ENCODE measurements at regions of chr21 and their contacts with region 1.

Region 1: DNA sequence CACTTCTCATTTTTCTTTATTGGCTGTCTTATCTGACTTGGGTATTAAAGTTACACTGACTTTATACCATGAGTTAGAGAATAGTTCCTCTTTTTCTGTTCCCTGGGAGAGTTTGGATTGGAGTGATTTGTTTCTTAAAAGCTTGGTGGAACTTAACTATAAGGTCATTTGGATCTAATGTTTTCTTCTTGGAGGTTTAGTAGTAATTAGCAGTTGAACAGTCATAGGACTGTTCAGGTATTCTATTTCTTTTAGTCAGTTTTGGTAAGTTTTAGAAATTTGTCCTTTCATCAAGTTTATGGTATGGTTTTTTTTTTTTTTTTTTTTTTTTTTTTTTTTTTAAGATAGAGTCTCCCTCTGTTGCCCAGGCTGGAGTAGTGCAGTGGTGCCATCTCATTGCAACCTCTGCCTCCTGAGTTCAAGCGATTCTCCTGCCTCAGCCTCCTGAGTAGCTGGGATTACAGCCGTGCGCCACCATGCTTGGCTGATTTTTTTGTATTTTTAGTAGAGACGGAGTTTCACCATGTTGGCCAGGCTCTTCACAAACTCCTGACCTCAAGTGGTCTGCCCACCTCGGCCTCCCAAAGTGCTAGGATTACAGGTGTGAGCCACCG is 6.3 kb downstream of the TTC3 start:
- DNase-seq: no peak
- H3K4me3 ChIP-seq: no peak overlapping the region
- H3K27ac ChIP-seq: no peak overlapping the region
- H3K4me1 ChIP-seq: no peaks in the 10 kb centered on the region
- H3K27me3 ChIP-seq: no peaks in the 10 kb centered on the region
- CTCF ChIP-seq: peak; percentile 49

Region 2: DNA sequence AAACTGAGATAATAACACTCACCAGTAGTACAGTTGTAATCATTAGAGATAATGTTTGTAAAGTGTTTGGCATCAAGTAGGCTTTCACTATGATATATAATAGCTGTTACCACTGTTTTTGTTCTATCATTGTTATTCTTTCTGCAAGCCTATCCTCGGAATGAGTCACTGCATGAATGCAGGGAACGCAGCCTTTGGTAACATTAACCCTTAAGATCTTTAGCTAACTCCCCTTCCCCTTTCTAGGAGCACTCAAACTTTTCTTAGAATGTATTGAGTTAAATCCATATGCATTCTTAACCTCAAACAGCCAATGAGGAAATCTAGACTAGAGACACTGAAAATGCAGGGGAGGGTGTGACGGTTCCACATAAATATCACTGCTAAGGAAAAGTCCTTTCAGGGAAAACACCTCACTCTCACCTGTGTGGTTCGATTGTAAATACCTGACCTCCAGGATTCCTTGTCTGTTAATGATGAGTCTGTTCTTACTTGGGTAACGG is 1486.3 kb before region 1 on chr21:
- intact Hi-C with region 1: no loop called
- DNase-seq: no peak
- H3K4me3 ChIP-seq: no peak overlapping the region
- H3K27ac ChIP-seq: no peak overlapping the region
- H3K4me1 ChIP-seq: no peaks in the 10 kb centered on the region
- H3K27me3 ChIP-seq: peaks cover 6% of the 10 kb centered on the region
- CTCF ChIP-seq: no peak

Region 3: GRCh38 chr21:36989699-36990507 is 89.4 kb before region 1 on chr21:
- intact Hi-C with region 1: loop called (anchors 5 kb)
- DNase-seq: peak; percentile 91
- H3K4me3 ChIP-seq: peak overlapping the region; percentile 60
- H3K27ac ChIP-seq: peak overlapping the region; percentile 90
- H3K4me1 ChIP-seq: no peaks in the 10 kb centered on the region
- H3K27me3 ChIP-seq: no peaks in the 10 kb centered on the region
- CTCF ChIP-seq: peak; percentile 94